ENCODE measurements at regions of chr1 and their contacts with region 1.

Region 1: GRCh38 chr1:36516372-36517325 is 33.9 kb upstream of the CSF3R start:
- DNase-seq: peak; percentile 73
- H3K4me3 Mint-ChIP-seq: no peak overlapping the region
- H3K27ac Mint-ChIP-seq: no peak overlapping the region
- H3K4me1 Mint-ChIP-seq: peaks cover 7% of the 10 kb centered on the region
- H3K27me3 Mint-ChIP-seq: no peaks in the 10 kb centered on the region
- CTCF ChIP-seq: peak; percentile 90

Region 2: GRCh38 chr1:36350659-36351226 is 165.9 kb before region 1 on chr1:
- CTCF ChIA-PET with region 1: no interaction called
- POLR2A ChIA-PET with region 1: no interaction called
- intact Hi-C with region 1: no loop called
- DNase-seq: peak; percentile 77
- H3K4me3 Mint-ChIP-seq: peak overlapping the region; percentile 15
- H3K27ac Mint-ChIP-seq: peak overlapping the region; percentile 82
- H3K4me1 Mint-ChIP-seq: peaks cover 39% of the 10 kb centered on the region
- H3K27me3 Mint-ChIP-seq: no peaks in the 10 kb centered on the region
- CTCF ChIP-seq: no peak

Region 3: GRCh38 chr1:36497207-36497606 is 19.4 kb before region 1 on chr1:
- CTCF ChIA-PET with region 1: interaction called, 15 read pairs
- POLR2A ChIA-PET with region 1: no interaction called
- intact Hi-C with region 1: no loop called
- DNase-seq: no peak
- H3K4me3 Mint-ChIP-seq: no peak overlapping the region
- H3K27ac Mint-ChIP-seq: no peak overlapping the region
- H3K4me1 Mint-ChIP-seq: no peaks in the 10 kb centered on the region
- H3K27me3 Mint-ChIP-seq: peaks cover 38% of the 10 kb centered on the region
- CTCF ChIP-seq: no peak

Region 4: DNA sequence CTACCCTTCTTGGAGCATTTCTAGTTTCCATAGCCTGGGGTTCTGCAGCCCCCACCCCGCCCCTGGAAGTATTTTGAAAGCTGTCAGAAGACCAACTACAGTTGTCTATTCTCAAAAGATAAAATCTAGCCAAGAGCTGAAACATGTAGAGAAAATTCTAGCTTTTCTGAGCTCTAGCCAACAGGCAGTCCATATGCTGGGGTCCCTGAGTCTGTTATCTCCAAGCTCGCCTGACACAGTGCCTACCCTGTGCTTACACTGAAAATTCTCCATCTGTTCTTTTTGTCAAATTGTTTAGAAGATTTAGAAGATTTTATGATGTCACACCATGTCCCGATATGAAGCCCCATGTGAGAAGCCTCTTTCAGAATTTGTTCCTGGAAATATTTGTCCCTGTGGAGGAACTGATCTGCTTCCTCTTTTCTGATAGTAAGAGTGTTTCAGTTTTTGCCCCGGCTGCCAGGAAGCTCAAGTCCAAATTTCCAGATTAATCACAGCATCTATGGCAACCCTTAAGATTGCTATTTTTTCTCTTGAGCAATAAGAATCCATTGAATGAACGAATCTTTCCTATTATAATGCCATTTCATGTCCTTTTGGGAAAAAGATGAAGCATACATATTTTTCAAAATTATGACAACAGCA is 10.3 kb before region 1 on chr1:
- CTCF ChIA-PET with region 1: interaction called, 30 read pairs
- POLR2A ChIA-PET with region 1: no interaction called
- intact Hi-C with region 1: no loop called
- DNase-seq: no peak
- H3K4me3 Mint-ChIP-seq: no peak overlapping the region
- H3K27ac Mint-ChIP-seq: no peak overlapping the region
- H3K4me1 Mint-ChIP-seq: no peaks in the 10 kb centered on the region
- H3K27me3 Mint-ChIP-seq: peaks cover 28% of the 10 kb centered on the region
- CTCF ChIP-seq: no peak

Region 5: DNA sequence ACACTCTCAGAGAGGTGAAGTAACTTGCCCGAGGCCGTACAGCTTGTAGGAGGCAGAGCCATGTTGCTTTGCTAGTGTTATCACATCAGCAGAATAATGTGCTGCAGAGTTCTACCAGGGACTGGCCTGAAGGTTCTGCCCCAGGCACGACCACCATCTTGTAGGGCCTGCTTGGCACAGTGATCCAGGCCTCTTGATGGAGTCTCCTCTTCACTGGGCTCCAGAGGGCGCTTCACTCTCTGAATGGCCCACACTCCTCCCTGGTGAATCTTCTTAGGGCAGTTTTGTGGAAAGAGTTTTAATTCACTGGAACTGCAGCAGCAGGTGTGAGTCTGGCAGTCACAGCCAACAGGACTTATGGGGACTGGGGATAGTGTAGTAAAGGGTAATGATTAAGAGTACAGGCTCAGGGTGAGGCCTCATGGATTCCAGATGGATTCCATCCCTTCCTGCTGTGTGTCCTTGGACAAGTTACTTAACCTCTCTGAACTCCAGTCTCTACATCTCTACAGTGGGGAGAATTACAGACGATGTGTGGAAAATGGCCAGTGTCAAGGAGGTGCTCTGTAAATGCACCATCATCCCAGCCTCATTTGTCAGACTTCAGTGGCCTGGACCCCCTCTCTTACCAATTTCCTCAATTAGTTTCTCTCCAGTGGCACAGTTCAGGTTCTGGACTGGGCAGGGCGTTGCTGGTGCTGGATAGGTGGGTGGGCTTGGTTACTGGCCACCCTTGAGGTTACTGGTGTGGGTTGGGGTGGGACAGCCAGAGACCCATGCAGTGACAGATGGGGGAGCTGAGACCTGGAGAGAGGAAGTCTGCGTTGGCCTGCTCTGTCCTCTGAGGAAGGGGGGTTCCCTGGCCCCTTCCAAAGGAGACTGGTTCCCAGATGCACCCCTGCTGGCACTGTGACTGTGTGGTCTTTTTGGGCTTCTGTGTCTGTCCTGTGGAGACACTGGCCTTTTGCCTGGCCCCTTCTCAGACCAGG is 12.0 kb after region 1 on chr1:
- CTCF ChIA-PET with region 1: interaction called, 27 read pairs
- POLR2A ChIA-PET with region 1: no interaction called
- intact Hi-C with region 1: no loop called
- DNase-seq: no peak
- H3K4me3 Mint-ChIP-seq: no peak overlapping the region
- H3K27ac Mint-ChIP-seq: no peak overlapping the region
- H3K4me1 Mint-ChIP-seq: no peaks in the 10 kb centered on the region
- H3K27me3 Mint-ChIP-seq: peaks cover 17% of the 10 kb centered on the region
- CTCF ChIP-seq: no peak

Region 6: DNA sequence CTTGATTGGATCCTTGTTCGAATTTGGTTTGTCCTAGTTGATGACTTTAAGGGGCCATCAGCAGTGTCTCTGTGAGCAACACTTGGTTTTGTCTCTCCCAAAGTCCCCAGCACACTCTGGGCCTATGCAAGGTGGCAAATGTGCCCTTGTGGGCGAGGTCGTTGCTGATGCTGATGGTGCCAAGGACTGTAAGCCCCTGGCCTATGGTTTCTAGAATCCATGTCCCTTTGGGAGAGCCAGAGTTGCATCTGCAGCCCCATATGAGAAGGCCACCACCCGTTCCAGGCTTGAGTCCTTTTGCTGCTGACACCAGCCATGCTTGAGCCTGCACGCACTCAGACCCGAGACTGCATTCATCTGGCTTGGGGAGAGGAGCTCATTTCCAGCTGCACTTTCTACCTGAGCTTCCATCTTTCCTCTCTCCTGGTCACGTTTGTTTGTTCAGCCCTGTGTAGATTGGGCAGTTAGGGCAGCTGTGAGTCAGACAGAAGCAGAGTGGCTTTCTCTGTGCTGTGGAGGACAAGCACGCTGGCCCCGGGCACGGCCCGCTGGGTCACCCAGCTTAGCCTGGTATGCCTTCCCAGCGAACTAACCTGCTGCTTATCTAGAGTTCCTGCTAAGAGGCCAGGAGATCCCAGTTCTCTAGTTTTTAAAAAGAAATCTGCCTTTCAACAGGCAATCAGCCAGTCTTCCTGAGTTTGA is 18.2 kb after region 1 on chr1:
- CTCF ChIA-PET with region 1: interaction called, 27 read pairs
- POLR2A ChIA-PET with region 1: no interaction called
- intact Hi-C with region 1: no loop called
- DNase-seq: no peak
- H3K4me3 Mint-ChIP-seq: no peak overlapping the region
- H3K27ac Mint-ChIP-seq: no peak overlapping the region
- H3K4me1 Mint-ChIP-seq: no peaks in the 10 kb centered on the region
- H3K27me3 Mint-ChIP-seq: peaks cover 75% of the 10 kb centered on the region
- CTCF ChIP-seq: no peak